Activated CD4-positive, alpha-beta memory T cell treated with anti-CD3 and anti-CD28 coated beads, Interleukin-2, amount 10 ng/mL, durations not matched to agents 7 days and 5 days (primary cell): ENCODE measurements at regions of chr1 and their contacts with region 1.

Region 1: DNA sequence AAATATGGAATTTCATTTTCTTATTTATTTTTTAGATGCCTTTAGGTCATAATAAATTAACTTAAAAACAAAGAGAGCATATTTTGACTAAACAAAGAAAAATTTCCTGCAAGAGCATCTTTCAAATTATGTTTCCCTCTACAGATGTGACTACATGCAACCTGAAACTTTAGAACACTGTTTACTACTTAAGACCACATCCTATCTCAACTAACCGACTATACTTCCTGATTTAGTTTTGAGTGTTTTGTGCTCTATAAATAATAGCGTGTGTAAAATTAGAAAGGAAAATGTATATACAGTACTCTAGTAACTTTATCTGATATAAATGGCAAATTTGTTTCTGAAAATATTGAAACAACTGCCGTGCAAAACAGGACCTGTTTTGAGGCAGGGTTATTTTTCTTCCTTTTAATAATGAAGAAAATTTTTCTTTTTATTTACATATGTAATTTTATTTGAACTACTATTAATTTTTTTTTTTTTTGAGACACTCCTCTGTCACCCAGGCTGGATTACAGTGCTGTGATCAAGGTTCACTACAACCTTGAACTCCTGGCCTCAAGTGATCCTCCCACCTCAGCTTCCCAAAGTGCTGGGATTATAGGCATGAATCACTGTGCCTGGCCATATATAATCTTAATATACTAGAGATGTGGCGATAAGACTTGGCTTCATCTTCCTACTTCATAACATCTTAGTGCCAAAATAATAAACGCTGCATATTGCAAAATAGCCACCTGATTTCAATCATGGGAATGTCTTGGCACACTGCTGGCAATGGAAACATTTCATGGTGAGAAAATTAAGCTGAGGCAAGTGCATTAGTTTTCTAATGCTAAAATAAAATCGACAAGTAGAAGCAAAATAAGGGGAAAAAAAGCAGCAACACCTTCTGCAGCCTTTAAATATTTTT is 12.3 kb downstream of the ZRANB2 start:
- DNase-seq: no peak
- H3K4me3 Mint-ChIP-seq: peak overlapping the region; percentile 45
- H3K27ac Mint-ChIP-seq: peak overlapping the region; percentile 70
- H3K4me1 Mint-ChIP-seq: peaks cover 36% of the 10 kb centered on the region
- H3K27me3 Mint-ChIP-seq: no peaks in the 10 kb centered on the region

Region 2: GRCh38 chr1:71080739-71081696 is 12.4 kb after region 1 on chr1 and contains the start of gene ZRANB2:
- CTCF ChIA-PET with region 1: interaction called, 9 read pairs
- POLR2A ChIA-PET with region 1: interaction called, 13 read pairs
- DNase-seq: peak; percentile 91
- H3K4me3 Mint-ChIP-seq: peak within 1 kb of the TSS; percentile 99
- H3K27ac Mint-ChIP-seq: peak within 1 kb of the TSS; percentile 99
- H3K4me1 Mint-ChIP-seq: peaks cover 33% of the 10 kb centered on the region
- H3K27me3 Mint-ChIP-seq: peaks cover 12% of the 10 kb centered on the region
- total RNA-seq, gene ZRANB2: 120 to 122 TPM